ENCODE measurements at regions of chr5 and their contacts with region 1.

Region 1: GRCh38 chr5:90529194-90529938 is at the start of gene LYSMD3:
- DNase-seq: peak; percentile 99
- H3K4me3 ChIP-seq: peak within 1 kb of the TSS; percentile 99 to 100
- H3K27ac ChIP-seq: peak within 1 kb of the TSS; percentile 79 to 91
- H3K4me1 ChIP-seq: peaks cover 0 to 5% of the 10 kb centered on the region in 2 experiments; a peak in 3 of 4 replicates
- H3K27me3 ChIP-seq: peaks cover 11% of the 10 kb centered on the region
- CTCF ChIP-seq: no peak
- EP300 ChIP-seq: no peak
- RAD21 ChIP-seq: no peak
- polyA plus RNA-seq, gene LYSMD3: 5.2 and 6.7 TPM in 2 replicates

Region 2: DNA sequence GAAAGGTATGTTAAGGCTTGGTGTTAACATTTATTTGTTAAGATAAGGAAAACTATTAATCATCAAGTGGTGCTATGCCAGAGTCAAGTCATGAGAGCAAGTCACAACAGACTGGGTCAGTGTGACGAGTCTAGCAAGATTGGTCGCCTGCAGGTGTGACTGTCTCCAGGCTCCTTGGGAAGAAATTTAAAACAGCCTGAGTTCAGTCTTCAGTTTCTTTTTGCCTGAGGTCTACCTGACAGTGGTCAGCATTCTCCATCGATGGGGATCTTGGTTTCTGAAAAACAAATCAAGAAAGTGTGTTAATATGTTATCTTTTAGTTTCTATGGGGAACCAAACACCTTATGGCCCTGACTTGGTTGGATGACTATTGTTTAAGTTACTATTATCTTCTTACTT is 176.1 kb before region 1 on chr5:
- CTCF ChIA-PET with region 1: no interaction called
- POLR2A ChIA-PET with region 1: no interaction called
- DNase-seq: no peak
- H3K4me3 ChIP-seq: no peak overlapping the region
- H3K27ac ChIP-seq: no peak overlapping the region
- H3K4me1 ChIP-seq: peaks cover 0 to 2% of the 10 kb centered on the region in 2 experiments; a peak in 1 of 4 replicates
- H3K27me3 ChIP-seq: no peaks in the 10 kb centered on the region
- CTCF ChIP-seq: no peak
- EP300 ChIP-seq: no peak
- RAD21 ChIP-seq: no peak

Region 3: DNA sequence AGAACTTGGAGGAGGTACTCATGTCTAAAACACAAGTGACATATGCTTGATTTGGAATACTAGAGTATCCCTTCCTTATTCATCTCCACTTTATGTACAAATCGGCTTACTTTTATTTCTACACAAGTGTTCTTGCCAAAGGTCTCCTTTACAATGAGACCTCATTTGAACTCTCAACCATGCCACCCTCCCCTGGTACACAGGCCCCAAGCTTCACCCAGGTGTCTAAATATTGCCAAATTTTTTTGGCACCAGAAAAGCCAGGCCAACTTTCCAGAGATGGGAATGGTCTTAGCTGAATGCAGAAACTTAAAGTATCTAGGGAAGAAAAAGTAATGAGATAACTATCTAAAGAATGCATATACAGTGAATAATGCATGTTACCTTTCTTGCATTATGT is 18.9 kb before region 1 on chr5:
- CTCF ChIA-PET with region 1: interaction called, 16 read pairs
- POLR2A ChIA-PET with region 1: no interaction called
- DNase-seq: no peak
- H3K4me3 ChIP-seq: no peak overlapping the region
- H3K27ac ChIP-seq: no peak overlapping the region
- H3K4me1 ChIP-seq: peaks cover 0 to 14% of the 10 kb centered on the region in 2 experiments; a peak in 1 of 4 replicates
- H3K27me3 ChIP-seq: no peaks in the 10 kb centered on the region
- CTCF ChIP-seq: no peak
- EP300 ChIP-seq: no peak
- RAD21 ChIP-seq: no peak

Measured in SK-N-SH (cell line).